ENCODE measurements at regions of chr5 and their contacts with region 1.

Region 1: DNA sequence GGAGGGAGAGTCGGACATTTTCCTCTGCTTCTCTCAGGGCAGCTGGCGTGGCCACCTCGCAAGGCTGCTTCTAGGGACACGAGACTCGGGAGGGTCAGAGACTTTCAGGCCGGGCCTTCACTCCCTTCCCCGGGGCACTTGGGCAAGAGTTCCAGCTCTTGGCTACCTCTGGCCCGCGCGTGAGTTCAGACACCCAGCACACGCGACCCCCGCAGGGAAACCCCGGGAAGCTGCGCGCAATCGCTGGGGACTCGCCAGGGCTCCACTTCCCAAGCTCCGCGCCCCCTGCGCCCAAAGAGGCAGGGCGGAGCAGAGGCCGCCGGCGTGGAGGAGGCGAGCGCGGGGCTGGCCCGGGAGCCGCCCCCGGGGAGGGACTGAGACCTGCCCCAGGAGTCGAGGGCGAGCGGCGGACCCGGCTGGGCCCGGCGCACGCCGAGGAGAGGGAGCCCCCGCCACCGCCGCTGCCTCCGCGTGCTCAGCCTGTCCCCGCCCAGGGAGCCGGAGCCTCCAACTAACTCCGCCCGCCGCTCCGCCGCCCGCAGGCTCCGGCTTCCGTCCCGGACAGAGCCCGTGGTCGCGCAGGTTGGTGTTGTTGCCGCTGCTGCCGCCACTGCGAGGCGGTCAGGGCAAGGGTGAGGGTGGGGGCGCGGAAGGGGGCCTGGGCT is at the start of gene PAM:
- DNase-seq: peak; percentile 62
- ATAC-seq: peak; percentile 89
- H3K4me3 ChIP-seq: peak within 1 kb of the TSS; percentile 59
- H3K27ac ChIP-seq: peak within 1 kb of the TSS; percentile 44
- H3K4me1 ChIP-seq: peaks cover 7% of the 10 kb centered on the region
- H3K27me3 ChIP-seq: no peaks in the 10 kb centered on the region
- CTCF ChIP-seq: no peak
- POLR2A ChIP-seq: peak; percentile 60; the same call in 1 of the 2 replicates
- RAD21 ChIP-seq: no peak
- total RNA-seq, gene PAM: 112 and 115 TPM in 2 replicates

Region 2: DNA sequence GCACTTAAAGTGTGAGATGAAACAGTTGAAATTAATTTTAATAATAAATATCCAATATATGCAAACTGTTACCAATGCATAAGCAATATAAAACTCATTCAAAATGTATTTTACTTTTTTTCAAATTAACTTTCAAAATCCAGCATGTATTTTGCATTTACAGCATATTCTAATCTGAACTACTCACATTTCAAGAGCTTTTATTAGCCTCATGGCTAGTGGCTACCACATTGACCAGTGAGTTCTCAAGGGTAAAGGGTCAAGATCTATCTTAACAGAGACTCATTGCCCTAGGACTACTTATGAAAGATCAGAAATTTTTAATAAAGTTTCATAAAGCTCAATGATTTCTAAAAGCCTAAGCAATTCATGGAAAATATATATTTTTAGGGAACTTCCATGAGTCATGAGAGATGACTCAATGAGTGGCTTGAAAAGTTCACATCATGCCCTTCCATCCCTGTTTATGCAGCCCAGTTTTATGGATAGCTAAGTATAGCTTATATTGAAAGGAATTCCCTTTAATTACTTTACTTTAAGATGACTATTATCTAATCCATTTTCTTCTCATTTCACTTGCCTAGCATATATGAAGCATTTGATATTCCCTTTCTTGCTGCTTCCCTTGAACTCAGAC is 1067.4 kb before region 1 on chr5:
- CTCF ChIA-PET with region 1: no interaction called
- POLR2A ChIA-PET with region 1: no interaction called
- dilution Hi-C with region 1: no loop called
- in situ Hi-C with region 1: no loop called
- intact Hi-C with region 1: no loop called
- DNase-seq: no peak
- ATAC-seq: no peak
- H3K4me3 ChIP-seq: no peak overlapping the region
- H3K27ac ChIP-seq: no peak overlapping the region
- H3K4me1 ChIP-seq: no peaks in the 10 kb centered on the region
- H3K27me3 ChIP-seq: no peaks in the 10 kb centered on the region
- CTCF ChIP-seq: no peak
- POLR2A ChIP-seq: no peak
- RAD21 ChIP-seq: no peak

Region 3: DNA sequence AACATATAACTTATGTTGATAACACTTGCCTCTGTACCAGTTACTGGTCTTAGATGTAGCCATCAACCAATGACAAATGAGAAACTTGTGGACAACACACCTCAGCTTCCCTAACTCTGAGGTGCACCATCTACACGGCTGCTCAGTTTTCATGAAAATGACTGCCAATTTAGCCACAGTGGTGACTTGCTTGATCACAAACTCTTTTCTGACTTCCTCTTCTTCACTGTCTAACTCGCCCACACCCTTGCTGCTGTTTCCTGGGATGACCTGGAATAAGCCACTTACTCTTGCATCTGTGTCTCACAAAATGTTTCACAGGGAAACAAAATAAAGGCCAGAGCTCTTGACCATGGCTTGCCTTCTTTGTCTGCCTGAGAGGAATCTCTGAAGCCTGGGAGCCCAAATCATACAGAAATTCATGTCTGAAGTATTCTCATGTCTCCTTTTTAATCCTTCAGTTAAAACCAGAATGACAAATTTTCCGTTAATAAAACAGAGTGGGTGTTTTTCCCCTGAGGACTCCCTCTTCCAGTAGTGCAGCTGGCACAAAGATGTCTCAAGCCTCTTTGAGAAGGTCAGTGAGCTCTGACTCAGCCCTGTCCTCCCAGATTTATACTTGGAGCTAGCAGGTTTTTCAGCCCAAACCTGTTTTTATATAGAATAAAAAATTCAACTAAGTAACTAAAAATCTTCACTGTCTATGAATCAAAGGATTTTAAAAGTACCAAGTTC is 126.3 kb before region 1 on chr5:
- CTCF ChIA-PET with region 1: no interaction called
- POLR2A ChIA-PET with region 1: no interaction called
- dilution Hi-C with region 1: no loop called
- in situ Hi-C with region 1: no loop called
- intact Hi-C with region 1: no loop called
- DNase-seq: peak; percentile 7
- ATAC-seq: no peak
- H3K4me3 ChIP-seq: no peak overlapping the region
- H3K27ac ChIP-seq: no peak overlapping the region
- H3K4me1 ChIP-seq: peaks cover 5% of the 10 kb centered on the region; the same call in 1 of the 2 replicates
- H3K27me3 ChIP-seq: no peaks in the 10 kb centered on the region
- CTCF ChIP-seq: no peak
- POLR2A ChIP-seq: no peak
- RAD21 ChIP-seq: no peak

Region 4: GRCh38 chr5:102715082-102715819 is 39.6 kb before region 1 on chr5:
- CTCF ChIA-PET with region 1: no interaction called
- POLR2A ChIA-PET with region 1: no interaction called
- dilution Hi-C with region 1: no loop called
- in situ Hi-C with region 1: no loop called
- intact Hi-C with region 1: loop called (anchors 2 kb)
- DNase-seq: peak; percentile 90
- ATAC-seq: peak; percentile 66
- H3K4me3 ChIP-seq: no peak overlapping the region
- H3K27ac ChIP-seq: 0 out of 2 replicates have a peak overlapping the region, but pooled peaks have one; percentile 44
- H3K4me1 ChIP-seq: peaks cover 11% of the 10 kb centered on the region
- H3K27me3 ChIP-seq: no peaks in the 10 kb centered on the region
- CTCF ChIP-seq: no peak
- POLR2A ChIP-seq: no peak
- RAD21 ChIP-seq: no peak

Region 5: DNA sequence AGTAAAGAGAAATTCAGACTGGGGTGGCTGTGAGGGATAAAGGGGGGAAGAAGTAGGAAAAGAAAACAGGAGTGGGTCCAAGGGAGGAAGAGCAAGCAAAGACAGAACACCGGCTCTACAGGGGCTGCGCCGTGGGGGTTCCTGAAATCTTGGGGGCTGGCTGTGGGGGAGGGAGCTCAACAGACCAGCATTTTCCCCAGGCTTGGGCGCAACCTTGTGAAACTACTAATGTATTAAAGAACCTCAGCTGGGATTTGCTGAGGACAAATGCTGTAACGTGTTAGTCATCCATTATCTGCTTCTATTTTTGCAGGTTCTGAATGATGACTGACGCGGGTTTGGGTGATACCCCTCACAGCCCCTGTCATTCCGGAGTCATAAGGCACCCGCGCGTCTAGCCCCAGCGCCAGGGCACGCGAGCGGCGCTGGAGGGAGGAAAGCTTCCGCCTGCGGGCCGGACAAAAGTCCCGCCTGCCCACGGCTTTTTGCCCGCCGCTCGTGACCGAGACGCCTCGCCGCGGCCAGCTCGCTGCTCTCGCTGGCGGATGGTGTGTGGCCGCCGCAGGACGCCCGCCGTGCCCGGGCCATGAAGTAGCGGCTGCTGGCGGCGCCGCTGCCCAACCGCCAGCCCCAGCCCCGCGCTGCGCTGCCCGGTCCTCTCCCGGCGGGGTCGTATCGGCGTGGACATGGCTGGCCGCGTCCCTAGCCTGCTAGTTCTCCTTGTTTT is 110.8 kb after region 1 on chr5:
- CTCF ChIA-PET with region 1: no interaction called
- POLR2A ChIA-PET with region 1: interaction called, 4 read pairs
- dilution Hi-C with region 1: no loop called
- in situ Hi-C with region 1: no loop called
- intact Hi-C with region 1: loop called (anchors 5 kb)
- DNase-seq: peak; percentile 88
- ATAC-seq: peak; percentile 83
- H3K4me3 ChIP-seq: peak overlapping the region; percentile 56
- H3K27ac ChIP-seq: peak overlapping the region; percentile 79
- H3K4me1 ChIP-seq: peaks cover 2% of the 10 kb centered on the region
- H3K27me3 ChIP-seq: no peaks in the 10 kb centered on the region
- CTCF ChIP-seq: no peak
- POLR2A ChIP-seq: peak; percentile 82
- RAD21 ChIP-seq: no peak

Region 6: DNA sequence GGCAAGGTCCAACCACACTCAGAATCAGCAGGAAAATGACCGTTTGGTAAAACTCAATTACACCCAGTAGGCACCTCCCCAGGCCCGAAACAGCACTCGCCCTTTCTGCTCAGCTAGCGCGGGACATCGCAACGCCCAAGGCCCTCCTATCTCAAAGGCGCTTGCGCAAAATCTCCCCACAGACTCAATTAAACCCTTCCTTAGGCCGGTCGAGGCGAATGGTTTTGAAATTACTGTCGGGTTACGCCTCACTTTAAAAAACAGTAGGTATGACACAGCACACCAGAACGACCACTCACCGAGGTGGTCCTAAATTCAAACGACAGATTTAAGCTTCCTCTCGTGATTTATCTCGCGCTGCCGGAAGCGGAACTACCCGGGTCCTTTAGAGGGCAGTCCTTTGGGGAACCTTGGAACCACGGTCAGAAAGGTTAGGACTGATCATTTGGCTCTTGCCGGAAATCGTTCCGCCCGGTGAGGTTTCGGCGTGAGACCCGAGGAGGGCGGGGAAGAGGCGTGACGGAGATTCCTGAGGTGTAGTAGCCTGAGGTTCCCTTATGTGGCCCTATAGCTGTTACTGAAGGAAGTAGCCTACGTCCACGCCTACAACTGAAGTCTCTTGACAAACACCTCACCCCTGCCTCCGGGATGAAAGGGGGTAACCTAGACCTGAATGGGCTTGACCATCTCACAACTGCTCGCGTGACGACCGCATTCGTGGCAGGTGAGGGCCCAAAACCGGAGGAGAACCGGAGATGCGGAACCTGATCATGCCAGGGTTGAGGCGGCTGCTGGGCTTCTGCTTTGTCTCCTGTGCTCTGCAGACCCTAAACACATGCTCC is 365.1 kb after region 1 on chr5 and contains the starts of genes GIN1 and PPIP5K2:
- CTCF ChIA-PET with region 1: no interaction called
- POLR2A ChIA-PET with region 1: no interaction called
- dilution Hi-C with region 1: no loop called
- in situ Hi-C with region 1: loop called (anchors 10 kb)
- intact Hi-C with region 1: loop called (anchors 10 kb)
- DNase-seq: peak; percentile 98
- ATAC-seq: peak; percentile 97
- H3K4me3 ChIP-seq: peak within 1 kb of the TSS; percentile 81
- H3K27ac ChIP-seq: peak within 1 kb of the TSS; percentile 86
- H3K4me1 ChIP-seq: no peaks in the 10 kb centered on the region
- H3K27me3 ChIP-seq: no peaks in the 10 kb centered on the region
- CTCF ChIP-seq: no peak
- POLR2A ChIP-seq: peak; percentile 76
- RAD21 ChIP-seq: no peak
- total RNA-seq, gene GIN1: 2.9 and 6.4 TPM in 2 replicates
- total RNA-seq, gene PPIP5K2: 67.6 and 96.4 TPM in 2 replicates

Measured in IMR-90 (cell line).